A549 (cell line): ENCODE measurements at regions of chr20 and their contacts with region 1.

Region 1: GRCh38 chr20:4014031-4014474 is 1.3 kb downstream of the RNF24 start:
- DNase-seq: peak; percentile 73 to 87
- ATAC-seq: peak; percentile 74 to 84
- H3K4me3 ChIP-seq: peak overlapping the region; percentile 95
- H3K27ac ChIP-seq: peak overlapping the region; percentile 34 to 82; a peak in 4 of 6 replicates
- H3K4me1 ChIP-seq: peaks cover 51% of the 10 kb centered on the region
- CTCF ChIP-seq: peak; percentile 91
- EP300 ChIP-seq: no peak
- POLR2A ChIP-seq: no peak
- RAD21 ChIP-seq: peak; percentile 95 to 96

Region 2: GRCh38 chr20:3980260-3981131 is 33.6 kb before region 1 on chr20:
- CTCF ChIA-PET with region 1: interaction called, 3 read pairs
- POLR2A ChIA-PET with region 1: interaction called, 10 read pairs
- DNase-seq: peak; percentile 59 to 76
- ATAC-seq: peak; percentile 85 to 90
- H3K4me3 ChIP-seq: peak overlapping the region; percentile 36
- H3K27ac ChIP-seq: peak overlapping the region; percentile 83 to 85
- H3K4me1 ChIP-seq: peaks cover 19% of the 10 kb centered on the region
- CTCF ChIP-seq: no peak
- EP300 ChIP-seq: no peak
- POLR2A ChIP-seq: no peak
- RAD21 ChIP-seq: no peak

Region 3: DNA sequence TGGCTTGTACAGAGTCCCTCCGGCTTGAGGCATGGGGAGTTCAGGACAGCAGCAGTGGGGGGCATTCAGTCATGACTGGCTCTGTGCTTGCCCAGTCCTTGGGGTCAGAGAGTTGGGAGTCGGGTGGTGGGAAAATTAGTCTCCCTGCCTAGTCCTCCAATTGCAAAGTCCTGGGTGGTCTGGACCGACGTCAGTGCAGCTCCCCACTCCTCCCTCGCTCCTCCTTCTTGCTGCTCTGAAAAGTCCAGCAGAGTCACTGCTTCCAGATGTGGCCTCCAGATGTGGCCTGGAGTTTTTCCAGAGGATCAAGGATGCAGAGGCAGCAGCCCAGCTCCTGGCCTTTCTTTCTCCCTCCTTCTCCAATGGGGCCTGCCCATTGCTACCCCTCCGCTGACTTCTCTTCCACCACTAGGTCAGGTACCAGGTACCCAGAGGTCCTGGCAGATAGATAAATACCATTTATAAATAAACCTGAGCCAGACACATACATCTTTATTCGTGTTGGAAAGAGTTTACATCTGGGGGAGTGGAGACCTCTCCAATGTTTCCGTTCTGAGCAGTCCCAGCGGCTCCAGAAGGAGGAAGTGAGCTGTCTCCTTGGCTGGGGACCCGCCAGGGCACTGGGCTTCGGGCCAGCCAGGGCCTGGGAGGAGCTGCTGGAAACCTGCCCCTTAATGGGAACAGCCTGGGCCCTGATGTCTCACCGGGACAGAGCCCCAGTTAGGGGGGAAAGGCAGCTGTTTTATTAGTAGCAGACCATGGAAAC is 50.3 kb after region 1 on chr20:
- CTCF ChIA-PET with region 1: interaction called, 126 read pairs
- POLR2A ChIA-PET with region 1: no interaction called
- DNase-seq: peak; percentile 42 to 64
- ATAC-seq: peak; percentile 71 to 87; a peak in 5 of 6 replicates
- H3K4me3 ChIP-seq: no peak overlapping the region
- H3K27ac ChIP-seq: peak overlapping the region; percentile 45 to 76
- H3K4me1 ChIP-seq: peaks cover 23% of the 10 kb centered on the region
- CTCF ChIP-seq: no peak
- EP300 ChIP-seq: no peak
- POLR2A ChIP-seq: no peak
- RAD21 ChIP-seq: no peak

Region 4: GRCh38 chr20:5041433-5041832 is 1027.4 kb after region 1 on chr20:
- CTCF ChIA-PET with region 1: no interaction called
- POLR2A ChIA-PET with region 1: no interaction called
- DNase-seq: no peak
- ATAC-seq: peak; percentile 47 to 56; a peak in 3 of 6 replicates
- H3K4me3 ChIP-seq: no peak overlapping the region
- H3K27ac ChIP-seq: peak overlapping the region in 1 of 2 experiments; percentile 5; a peak in 1 of 6 replicates
- H3K4me1 ChIP-seq: peaks cover 5% of the 10 kb centered on the region; the same call in 2 of the 3 replicates
- CTCF ChIP-seq: no peak
- EP300 ChIP-seq: no peak
- POLR2A ChIP-seq: no peak
- RAD21 ChIP-seq: no peak